Psoas muscle (tissue), 8 donors: ENCODE measurements at regions of chr2 and their contacts with region 1.

Region 1: GRCh38 chr2:16114836-16115235 is 174.5 kb downstream of the MYCN start:
- DNase-seq: no peak
- ATAC-seq: no peak
- H3K4me3 ChIP-seq: no peak overlapping the region
- H3K27ac ChIP-seq: no peak overlapping the region
- H3K4me1 ChIP-seq: no peaks in the 10 kb centered on the region
- H3K27me3 ChIP-seq: peaks cover 0 to 2% (median 0%) of the 10 kb centered on the region in 3 donors
- CTCF ChIP-seq: no peak

Region 2: DNA sequence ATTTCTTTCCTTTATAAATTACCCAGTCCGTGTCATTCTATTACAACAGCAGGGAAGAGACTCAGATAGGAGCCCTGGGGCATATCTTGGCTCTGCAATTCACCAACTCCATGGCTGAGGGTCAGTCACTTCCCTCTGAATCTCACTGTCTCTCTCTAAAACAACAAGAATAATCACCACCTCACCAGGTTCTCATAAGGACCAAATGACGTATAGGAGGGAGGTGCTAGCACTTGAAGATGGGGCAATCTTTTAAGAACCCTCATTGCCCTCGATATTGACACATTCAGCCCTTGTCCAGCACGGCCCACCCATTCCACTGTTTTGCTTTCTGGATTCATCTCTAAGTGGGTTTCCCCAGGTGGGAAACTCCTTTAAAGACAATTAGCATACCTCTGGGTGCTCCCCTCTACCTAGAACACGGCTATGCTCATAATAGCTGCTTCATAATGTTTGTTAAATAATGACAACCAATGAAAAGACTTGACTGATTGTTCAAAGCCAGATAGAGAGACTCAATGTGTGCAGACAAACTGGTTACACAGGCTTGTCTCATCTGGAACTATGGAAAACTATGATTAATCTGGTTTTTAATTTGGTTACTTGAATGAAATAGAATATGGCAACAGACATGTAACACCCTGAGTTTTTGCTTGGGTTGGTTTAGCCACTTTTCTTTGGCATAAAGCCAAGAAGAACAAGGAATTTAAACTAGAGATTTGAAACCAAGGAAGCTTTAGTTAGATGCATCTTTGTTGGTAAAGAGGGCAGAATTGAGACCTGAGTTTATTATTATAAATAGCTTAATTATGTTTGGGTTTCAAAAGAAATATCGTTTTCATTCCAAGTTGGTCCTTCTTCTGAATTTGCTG is 159.3 kb before region 1 on chr2:
- intact Hi-C with region 1: no loop called
- DNase-seq: no peak
- ATAC-seq: no peak
- H3K4me3 ChIP-seq: no peak overlapping the region
- H3K27ac ChIP-seq: no peak overlapping the region
- H3K4me1 ChIP-seq: no peaks in the 10 kb centered on the region
- H3K27me3 ChIP-seq: no peaks in the 10 kb centered on the region
- CTCF ChIP-seq: no peak

Region 3: GRCh38 chr2:16365366-16365765 is 250.5 kb after region 1 on chr2:
- intact Hi-C with region 1: no loop called
- DNase-seq: no peak
- ATAC-seq: no peak
- H3K4me3 ChIP-seq: no peak overlapping the region
- H3K27ac ChIP-seq: no peak overlapping the region
- H3K4me1 ChIP-seq: no peaks in the 10 kb centered on the region
- H3K27me3 ChIP-seq: no peaks in the 10 kb centered on the region
- CTCF ChIP-seq: no peak

Region 4: DNA sequence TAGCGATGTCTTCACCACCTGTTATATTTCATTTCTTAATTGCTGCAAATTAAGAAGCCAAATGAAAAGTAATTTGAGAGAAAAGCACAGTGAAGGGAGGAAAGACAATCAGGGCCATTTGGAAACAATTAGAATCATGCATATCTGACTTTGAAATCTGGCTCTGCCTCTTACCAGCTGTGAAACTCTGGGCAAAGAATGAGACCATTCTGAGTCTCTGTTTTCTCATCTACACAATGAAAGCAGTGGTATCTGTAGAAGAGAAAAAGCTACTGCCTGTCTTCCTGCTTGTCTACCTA is 885.3 kb after region 1 on chr2:
- intact Hi-C with region 1: loop called in 1 of 2 experiments (anchors 5 kb)
- DNase-seq: no peak
- ATAC-seq: no peak
- H3K4me3 ChIP-seq: no peak overlapping the region
- H3K27ac ChIP-seq: no peak overlapping the region
- H3K4me1 ChIP-seq: no peaks in the 10 kb centered on the region
- H3K27me3 ChIP-seq: no peaks in the 10 kb centered on the region
- CTCF ChIP-seq: no peak